MCF 10A (cell line): ENCODE measurements at regions of chr18 and their contacts with region 1.

Region 1: DNA sequence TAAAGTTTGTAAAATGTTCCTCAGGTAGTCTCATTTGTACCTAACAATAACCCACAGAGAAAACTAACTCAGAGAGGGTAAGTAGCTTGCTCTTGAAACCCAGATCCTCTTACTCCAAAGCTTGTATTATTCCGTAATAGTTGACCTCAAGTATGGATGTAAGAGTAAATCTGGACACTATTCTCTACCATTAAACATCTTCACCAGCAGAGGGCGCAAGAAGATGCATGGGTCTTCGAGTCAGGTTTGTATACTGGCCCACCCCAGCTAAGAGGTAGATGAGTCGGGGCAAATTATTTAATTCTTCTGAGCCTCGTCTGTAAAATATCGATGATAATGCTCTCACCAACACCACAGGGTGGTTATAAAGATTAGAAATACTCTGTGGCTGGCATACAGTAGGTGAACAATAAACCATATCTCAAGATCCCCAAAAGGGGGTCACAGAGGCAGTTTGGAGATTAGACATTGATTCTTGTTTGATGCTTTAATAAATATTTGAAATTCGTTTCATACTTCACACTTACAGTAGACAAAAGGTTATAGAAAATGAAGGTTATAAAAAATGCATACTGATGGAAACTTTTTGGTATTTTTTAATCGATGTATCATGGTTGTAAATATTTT is 3.5 kb upstream of the CABLES1 start:
- DNase-seq: peak; percentile 90
- H3K4me3 Mint-ChIP-seq: no peak overlapping the region
- H3K27ac Mint-ChIP-seq: no peak overlapping the region
- H3K4me1 Mint-ChIP-seq: peaks cover 11% of the 10 kb centered on the region
- H3K27me3 Mint-ChIP-seq: no peaks in the 10 kb centered on the region
- CTCF ChIP-seq: peak; percentile 54

Region 2: GRCh38 chr18:22778996-22779395 is 352.8 kb before region 1 on chr18:
- CTCF ChIA-PET with region 1: no interaction called
- POLR2A ChIA-PET with region 1: no interaction called
- intact Hi-C with region 1: no loop called
- DNase-seq: peak; percentile 22
- H3K4me3 Mint-ChIP-seq: no peak overlapping the region
- H3K27ac Mint-ChIP-seq: no peak overlapping the region
- H3K4me1 Mint-ChIP-seq: no peaks in the 10 kb centered on the region
- H3K27me3 Mint-ChIP-seq: no peaks in the 10 kb centered on the region
- CTCF ChIP-seq: no peak

Region 3: DNA sequence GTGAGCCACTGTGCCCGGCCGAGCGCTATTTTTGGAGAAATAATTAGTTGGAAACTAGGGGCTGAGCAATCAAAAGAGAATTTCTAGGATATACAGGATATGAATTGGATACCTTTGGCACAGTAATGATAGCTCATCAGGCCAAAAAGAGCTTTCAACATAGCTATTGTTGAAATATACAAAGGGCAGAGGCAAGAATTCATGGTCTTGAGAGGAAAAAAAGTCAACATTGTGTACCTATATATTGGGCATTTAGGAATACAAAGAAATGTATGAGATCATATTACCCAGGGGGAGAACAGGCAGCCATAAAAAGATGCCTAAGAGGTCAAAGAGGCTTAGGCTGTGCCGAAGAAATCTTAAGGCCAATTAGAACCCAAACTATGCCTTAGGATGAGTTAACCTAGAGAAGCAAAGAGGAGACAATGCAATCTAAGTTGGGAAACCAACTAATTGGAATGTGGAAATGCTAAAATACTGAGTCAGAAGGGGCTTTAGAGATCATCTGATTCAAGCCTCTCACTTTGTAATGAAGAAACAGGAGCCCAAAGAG is 99.7 kb before region 1 on chr18:
- CTCF ChIA-PET with region 1: interaction called, 20 read pairs
- POLR2A ChIA-PET with region 1: interaction called, 6 read pairs
- intact Hi-C with region 1: loop called (anchors 2 kb)
- DNase-seq: peak; percentile 75
- H3K4me3 Mint-ChIP-seq: no peak overlapping the region
- H3K27ac Mint-ChIP-seq: peak overlapping the region; percentile 50
- H3K4me1 Mint-ChIP-seq: peaks cover 17% of the 10 kb centered on the region
- H3K27me3 Mint-ChIP-seq: no peaks in the 10 kb centered on the region
- CTCF ChIP-seq: no peak

Region 4: DNA sequence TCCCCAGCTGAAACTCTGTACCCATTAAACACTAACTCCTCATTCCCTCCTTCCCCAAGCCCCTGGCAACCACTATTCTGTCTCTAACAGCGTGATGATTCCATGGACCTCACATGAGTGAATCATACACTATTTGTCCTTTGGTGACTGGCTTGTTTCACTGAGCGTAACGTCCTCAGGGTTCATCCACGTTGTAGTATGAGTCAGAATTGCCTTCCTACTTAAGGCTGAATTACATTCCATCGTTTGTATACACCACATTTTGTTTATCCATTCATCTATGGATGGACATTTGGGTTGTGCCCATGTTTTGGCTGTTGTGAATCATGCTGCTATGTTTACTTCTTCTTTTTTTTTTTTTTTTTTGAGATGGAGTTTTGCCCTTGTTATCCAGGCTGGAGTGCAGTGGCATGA is 16.1 kb before region 1 on chr18:
- CTCF ChIA-PET with region 1: interaction called, 15 read pairs
- POLR2A ChIA-PET with region 1: interaction called, 11 read pairs
- intact Hi-C with region 1: no loop called
- DNase-seq: peak; percentile 92
- H3K4me3 Mint-ChIP-seq: no peak overlapping the region
- H3K27ac Mint-ChIP-seq: peak overlapping the region; percentile 40
- H3K4me1 Mint-ChIP-seq: peaks cover 18% of the 10 kb centered on the region
- H3K27me3 Mint-ChIP-seq: no peaks in the 10 kb centered on the region
- CTCF ChIP-seq: no peak

Region 5: DNA sequence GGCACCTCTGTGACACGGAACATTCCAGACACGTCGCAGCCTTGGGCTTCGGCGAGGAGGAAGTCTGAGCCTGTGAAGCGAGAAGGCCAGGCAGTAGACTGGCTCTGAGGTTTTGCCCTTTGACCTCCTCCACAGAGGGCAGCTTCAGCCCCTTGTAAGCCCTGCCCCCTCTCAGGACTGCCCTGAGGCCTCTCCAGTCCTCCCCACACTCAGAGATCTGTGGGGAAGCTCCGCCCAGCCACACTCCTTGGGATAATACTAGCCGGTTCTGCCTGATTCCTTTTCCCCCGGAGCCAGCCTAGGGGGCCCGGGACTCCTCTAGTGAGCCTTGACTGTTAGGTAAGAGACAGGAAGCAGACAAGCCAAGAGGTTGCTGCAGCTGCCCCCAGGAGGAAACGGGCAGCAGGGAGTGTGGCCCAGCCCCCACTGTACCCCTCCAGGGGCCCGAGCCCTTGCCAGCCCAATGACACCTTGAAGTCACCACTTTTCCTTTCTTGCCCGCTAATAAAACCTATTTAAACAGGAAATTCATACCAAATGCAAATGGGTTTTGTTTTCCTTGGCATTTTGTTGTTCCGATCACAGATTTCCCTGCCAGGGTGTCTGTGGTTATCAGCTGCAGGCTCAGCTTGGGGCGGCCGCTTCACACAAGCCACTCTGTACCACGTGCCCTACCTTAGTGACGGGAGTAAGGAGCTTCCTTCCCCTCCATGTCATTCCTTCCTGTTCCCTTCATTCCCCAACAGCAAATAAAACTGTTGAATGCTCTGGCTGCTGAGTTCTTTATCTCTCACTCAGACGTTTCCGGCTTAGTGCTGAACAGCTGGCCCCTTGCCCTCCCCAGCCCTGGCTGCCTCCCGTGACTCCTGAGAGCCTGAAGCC is 128.1 kb after region 1 on chr18:
- CTCF ChIA-PET with region 1: interaction called, 4 read pairs
- POLR2A ChIA-PET with region 1: no interaction called
- intact Hi-C with region 1: loop called (anchors 10 kb)
- DNase-seq: peak; percentile 66
- H3K4me3 Mint-ChIP-seq: peak overlapping the region; percentile 62
- H3K27ac Mint-ChIP-seq: peak overlapping the region; percentile 84
- H3K4me1 Mint-ChIP-seq: peaks cover 21% of the 10 kb centered on the region
- H3K27me3 Mint-ChIP-seq: no peaks in the 10 kb centered on the region
- CTCF ChIP-seq: no peak

Region 6: DNA sequence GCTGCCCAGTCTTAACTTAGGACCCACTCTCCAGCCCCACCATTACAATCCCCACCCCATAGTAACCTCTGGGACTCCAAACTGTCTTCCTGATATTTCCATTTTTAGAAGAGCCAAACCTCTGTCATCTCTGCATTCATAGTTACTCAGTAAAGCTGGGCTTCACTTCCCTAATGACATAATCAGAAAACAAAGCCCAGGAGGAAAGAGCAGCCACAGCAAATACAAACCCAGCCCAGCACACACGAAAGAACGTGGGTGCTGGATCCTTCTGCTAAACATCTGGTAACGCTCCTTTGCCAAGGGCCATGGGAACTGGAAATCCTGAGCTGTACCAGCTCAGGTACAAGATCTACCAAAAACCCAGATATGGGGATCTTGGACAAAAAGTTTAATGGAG is 284.5 kb after region 1 on chr18:
- CTCF ChIA-PET with region 1: interaction called, 25 read pairs
- POLR2A ChIA-PET with region 1: no interaction called
- intact Hi-C with region 1: loop called (anchors 1 kb)
- DNase-seq: no peak
- H3K4me3 Mint-ChIP-seq: no peak overlapping the region
- H3K27ac Mint-ChIP-seq: no peak overlapping the region
- H3K4me1 Mint-ChIP-seq: no peaks in the 10 kb centered on the region
- H3K27me3 Mint-ChIP-seq: no peaks in the 10 kb centered on the region
- CTCF ChIP-seq: no peak